CD4-positive, alpha-beta T cell (primary cell): ENCODE measurements at regions of chr14 and their contacts with region 1.

Region 1: DNA sequence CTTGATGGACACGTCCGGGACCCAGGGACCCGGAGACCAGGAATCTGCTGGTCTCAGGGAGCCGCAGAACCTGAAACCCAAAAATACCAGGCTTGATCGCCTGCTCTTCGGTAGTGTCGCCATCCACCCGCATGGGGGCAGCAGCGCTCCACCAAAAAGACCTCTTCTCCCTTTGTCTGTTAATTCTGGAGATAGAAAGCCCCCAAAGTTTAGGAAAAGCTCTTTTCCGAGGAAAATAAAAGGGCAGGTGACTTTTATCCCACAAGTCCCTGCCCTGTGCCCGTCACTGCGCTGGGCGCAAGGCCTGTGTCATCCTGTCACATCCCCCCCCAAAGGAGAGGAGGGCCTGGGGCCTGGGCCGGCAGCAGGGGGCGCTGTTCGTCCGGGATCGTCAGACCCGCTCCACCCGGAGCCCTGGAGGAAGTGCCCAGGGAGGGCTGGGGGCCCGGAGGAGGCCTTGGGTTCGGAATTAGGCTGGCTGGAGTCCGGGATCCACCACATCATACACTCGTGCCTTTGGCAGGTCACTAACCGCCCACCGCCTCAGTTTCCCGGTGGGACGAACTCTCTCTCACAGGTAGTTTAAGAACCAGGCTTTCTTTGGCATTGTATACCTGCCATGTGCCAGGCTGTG is 31.9 kb downstream of the DAD1 start:
- DNase-seq: peak; percentile 83 to 98 (median 92)
- ATAC-seq: peak; percentile 24
- H3K4me3 ChIP-seq: peak overlapping the region; percentile 58
- H3K4me3 Mint-ChIP-seq: peak overlapping the region; percentile 96
- H3K27ac ChIP-seq: peak overlapping the region; percentile 99
- H3K27ac Mint-ChIP-seq: peak overlapping the region; percentile 97
- H3K4me1 ChIP-seq: peaks cover 100% of the 10 kb centered on the region
- H3K4me1 Mint-ChIP-seq: peaks cover 93% of the 10 kb centered on the region
- H3K27me3 ChIP-seq: no peaks in the 10 kb centered on the region
- H3K27me3 Mint-ChIP-seq: peaks cover 6% of the 10 kb centered on the region
- CTCF ChIP-seq: peak; percentile 100

Region 2: DNA sequence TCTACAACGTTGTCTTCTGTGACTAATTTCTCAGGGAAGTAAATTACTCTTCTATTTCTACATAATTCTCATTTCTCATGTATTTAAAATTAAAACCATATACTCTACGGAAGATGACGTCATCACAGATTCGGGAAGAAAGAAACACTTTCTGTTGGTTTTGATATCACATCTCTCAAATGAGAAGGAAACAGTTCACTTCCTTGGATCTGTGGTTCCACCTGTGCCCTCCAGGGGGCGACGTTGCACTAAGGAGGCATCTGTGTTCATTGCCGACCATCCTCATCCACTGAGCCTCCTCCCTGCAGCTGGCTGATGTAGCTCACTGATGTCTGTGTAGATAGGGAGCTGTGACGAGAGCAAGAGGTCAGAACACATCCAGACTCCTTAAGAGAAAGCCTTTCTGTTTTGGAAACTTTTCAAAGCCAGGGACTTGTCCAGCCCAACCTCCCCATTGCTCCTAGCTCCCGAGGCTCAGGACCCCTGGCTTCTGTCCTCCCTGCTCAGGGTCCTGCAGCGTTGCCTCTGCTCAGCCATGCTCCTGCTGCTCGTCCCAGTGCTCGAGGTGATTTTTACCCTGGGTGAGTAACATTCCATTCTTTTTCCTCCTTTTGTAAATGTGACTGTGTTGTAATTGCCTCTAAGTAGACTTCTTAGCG is 710.8 kb before region 1 on chr14:
- CTCF ChIA-PET with region 1: interaction called, 6 read pairs
- POLR2A ChIA-PET with region 1: interaction called, 29 read pairs
- intact Hi-C with region 1: loop called in 1 of 2 experiments (anchors 5 kb)
- DNase-seq: peak; percentile 52 to 79 (median 65)
- ATAC-seq: peak; percentile 75
- H3K4me3 ChIP-seq: peak overlapping the region; percentile 56
- H3K4me3 Mint-ChIP-seq: peak overlapping the region; percentile 95
- H3K27ac ChIP-seq: no peak overlapping the region
- H3K27ac Mint-ChIP-seq: peak overlapping the region; percentile 84
- H3K4me1 ChIP-seq: peaks cover under 1% of the 10 kb centered on the region
- H3K4me1 Mint-ChIP-seq: peaks cover 13% of the 10 kb centered on the region
- H3K27me3 ChIP-seq: peaks cover 0 to 8% of the 10 kb centered on the region in 2 experiments
- H3K27me3 Mint-ChIP-seq: peaks cover 34% of the 10 kb centered on the region
- CTCF ChIP-seq: peak; percentile 68

Region 3: DNA sequence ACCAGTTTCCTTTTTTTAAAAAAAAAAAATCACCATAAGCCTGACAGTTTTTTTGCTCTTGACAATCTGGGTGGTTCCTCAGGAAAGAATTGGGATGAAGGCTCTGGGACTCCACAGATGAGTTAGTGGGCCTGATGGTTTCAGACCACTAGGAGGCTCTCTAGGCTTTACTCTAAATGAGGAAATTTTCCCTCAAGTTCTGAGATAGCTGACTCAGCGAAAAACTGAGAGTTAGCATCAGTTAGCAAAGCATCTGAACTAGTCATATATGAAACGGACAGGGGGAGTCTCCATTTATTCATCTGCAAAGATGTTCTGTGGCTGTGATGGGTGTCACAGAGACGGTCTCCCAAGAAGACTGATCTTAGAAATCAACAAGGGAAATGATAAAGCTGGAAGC is 569.2 kb before region 1 on chr14:
- CTCF ChIA-PET with region 1: interaction called, 15 read pairs
- POLR2A ChIA-PET with region 1: interaction called, 12 read pairs
- intact Hi-C with region 1: loop called in 1 of 2 experiments (anchors 10 kb)
- DNase-seq: peak in 3 of 14 experiments; percentile 49 to 62 (median 54)
- ATAC-seq: no peak
- H3K4me3 ChIP-seq: no peak overlapping the region
- H3K4me3 Mint-ChIP-seq: peak overlapping the region; percentile 3
- H3K27ac ChIP-seq: no peak overlapping the region
- H3K27ac Mint-ChIP-seq: peak overlapping the region; percentile 75
- H3K4me1 ChIP-seq: peaks cover 6% of the 10 kb centered on the region
- H3K4me1 Mint-ChIP-seq: peaks cover 12% of the 10 kb centered on the region
- H3K27me3 ChIP-seq: no peaks in the 10 kb centered on the region
- H3K27me3 Mint-ChIP-seq: no peaks in the 10 kb centered on the region
- CTCF ChIP-seq: peak; percentile 50

Region 4: DNA sequence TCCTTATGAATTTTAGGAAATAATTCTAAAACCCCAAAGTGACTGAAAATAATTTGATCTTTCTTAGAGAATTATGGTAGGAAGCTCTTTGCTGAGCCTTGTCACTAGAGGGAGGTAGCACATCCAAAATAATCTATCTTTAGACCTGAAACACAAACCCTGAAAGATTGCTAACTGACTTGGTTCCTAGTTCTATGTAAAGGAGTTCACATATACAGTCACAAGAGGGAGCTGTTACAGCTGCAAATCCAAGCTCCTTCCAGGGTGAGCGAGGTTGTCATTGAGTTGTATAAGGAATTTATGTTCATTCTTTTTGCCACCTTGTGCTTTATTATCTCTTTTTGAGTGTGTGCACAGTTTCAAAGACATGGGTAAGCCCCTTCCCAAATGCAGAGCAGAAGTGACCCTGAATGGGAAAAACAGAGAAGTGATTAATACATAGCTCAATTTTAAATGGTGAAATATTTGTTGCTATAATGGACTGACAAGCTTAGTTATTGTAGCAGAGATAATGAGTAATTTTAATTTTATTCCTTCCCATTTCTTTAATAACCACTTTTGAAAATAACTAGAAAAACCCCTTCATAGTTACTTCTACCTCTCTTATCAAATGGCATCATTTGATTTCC is 356.0 kb before region 1 on chr14:
- CTCF ChIA-PET with region 1: interaction called, 6 read pairs
- POLR2A ChIA-PET with region 1: interaction called, 11 read pairs
- intact Hi-C with region 1: no loop called
- DNase-seq: peak in 3 of 14 experiments; percentile 54 to 66 (median 59)
- ATAC-seq: peak; percentile 90
- H3K4me3 ChIP-seq: no peak overlapping the region
- H3K4me3 Mint-ChIP-seq: peak overlapping the region; percentile 62
- H3K27ac ChIP-seq: no peak overlapping the region
- H3K27ac Mint-ChIP-seq: no peak overlapping the region
- H3K4me1 ChIP-seq: no peaks in the 10 kb centered on the region
- H3K4me1 Mint-ChIP-seq: peaks cover 10% of the 10 kb centered on the region
- H3K27me3 ChIP-seq: no peaks in the 10 kb centered on the region
- H3K27me3 Mint-ChIP-seq: no peaks in the 10 kb centered on the region
- CTCF ChIP-seq: no peak

Region 5: GRCh38 chr14:22513066-22513812 is 43.9 kb before region 1 on chr14:
- CTCF ChIA-PET with region 1: interaction called, 13 read pairs
- POLR2A ChIA-PET with region 1: interaction called, 613 read pairs
- intact Hi-C with region 1: loop called in 1 of 2 experiments (anchors 5 kb)
- DNase-seq: no peak
- ATAC-seq: no peak
- H3K4me3 ChIP-seq: peak overlapping the region; percentile 61
- H3K4me3 Mint-ChIP-seq: peak overlapping the region; percentile 78
- H3K27ac ChIP-seq: peak overlapping the region; percentile 77 to 99
- H3K27ac Mint-ChIP-seq: peak overlapping the region; percentile 93
- H3K4me1 ChIP-seq: peaks cover 93% of the 10 kb centered on the region
- H3K4me1 Mint-ChIP-seq: peaks cover 95% of the 10 kb centered on the region
- H3K27me3 ChIP-seq: no peaks in the 10 kb centered on the region
- H3K27me3 Mint-ChIP-seq: no peaks in the 10 kb centered on the region
- CTCF ChIP-seq: no peak

Region 6: GRCh38 chr14:22653012-22653621 is 96.0 kb after region 1 on chr14:
- CTCF ChIA-PET with region 1: interaction called, 4 read pairs
- POLR2A ChIA-PET with region 1: interaction called, 10 read pairs
- intact Hi-C with region 1: loop called in 1 of 2 experiments (anchors 1 kb)
- DNase-seq: peak; percentile 20 to 75 (median 37)
- ATAC-seq: peak; percentile 90
- H3K4me3 ChIP-seq: no peak overlapping the region
- H3K4me3 Mint-ChIP-seq: no peak overlapping the region
- H3K27ac ChIP-seq: no peak overlapping the region
- H3K27ac Mint-ChIP-seq: no peak overlapping the region
- H3K4me1 ChIP-seq: no peaks in the 10 kb centered on the region
- H3K4me1 Mint-ChIP-seq: no peaks in the 10 kb centered on the region
- H3K27me3 ChIP-seq: no peaks in the 10 kb centered on the region
- H3K27me3 Mint-ChIP-seq: no peaks in the 10 kb centered on the region
- CTCF ChIP-seq: peak; percentile 69

Region 7: GRCh38 chr14:22918804-22919600 is 361.9 kb after region 1 on chr14 and contains the start of gene RBM23:
- CTCF ChIA-PET with region 1: interaction called, 6 read pairs
- POLR2A ChIA-PET with region 1: interaction called, 10 read pairs
- intact Hi-C with region 1: no loop called
- DNase-seq: peak; percentile 99 to 100 (median 100)
- ATAC-seq: peak; percentile 84
- H3K4me3 ChIP-seq: peak within 1 kb of the TSS; percentile 74
- H3K4me3 Mint-ChIP-seq: peak within 1 kb of the TSS; percentile 88
- H3K27ac ChIP-seq: peak within 1 kb of the TSS; percentile 99 to 100
- H3K27ac Mint-ChIP-seq: peak within 1 kb of the TSS; percentile 100
- H3K4me1 ChIP-seq: peaks cover 38% of the 10 kb centered on the region
- H3K4me1 Mint-ChIP-seq: peaks cover 50% of the 10 kb centered on the region
- H3K27me3 ChIP-seq: no peaks in the 10 kb centered on the region
- H3K27me3 Mint-ChIP-seq: peaks cover 4% of the 10 kb centered on the region
- CTCF ChIP-seq: no peak
- total RNA-seq, gene RBM23: 87.9 to 111 TPM